Right ventricle myocardium inferior (tissue), 1 donor: ENCODE measurements at regions of chr3 and their contacts with region 1.

Region 1: GRCh38 chr3:124552239-124552638 is 178.0 kb upstream of the UMPS start:
- DNase-seq: no peak
- ATAC-seq: peak; percentile 49

Region 2: GRCh38 chr3:124492811-124493210 is 59.4 kb before region 1 on chr3:
- intact Hi-C with region 1: loop called (anchors 2 kb)
- DNase-seq: no peak
- ATAC-seq: no peak